Activated CD4-positive, alpha-beta T cell treated with anti-CD3 and anti-CD28 coated beads, Interleukin-2, amount 10 ng/mL, durations not matched to agents 7 days and 5 days (primary cell): ENCODE measurements at regions of chr6 and their contacts with region 1.

Region 1: GRCh38 chr6:90403489-90404381 is 107.1 kb upstream of the BACH2 start:
- DNase-seq: no peak
- H3K4me3 Mint-ChIP-seq: no peak overlapping the region
- H3K27ac Mint-ChIP-seq: peak overlapping the region; percentile 80
- H3K4me1 Mint-ChIP-seq: peaks cover 79% of the 10 kb centered on the region
- H3K27me3 Mint-ChIP-seq: no peaks in the 10 kb centered on the region

Region 2: GRCh38 chr6:90413867-90414266 is 10.1 kb after region 1 on chr6:
- CTCF ChIA-PET with region 1: interaction called, 26 read pairs
- POLR2A ChIA-PET with region 1: no interaction called
- DNase-seq: peak; percentile 79
- H3K4me3 Mint-ChIP-seq: peak overlapping the region; percentile 65
- H3K27ac Mint-ChIP-seq: peak overlapping the region; percentile 92
- H3K4me1 Mint-ChIP-seq: peaks cover 70% of the 10 kb centered on the region
- H3K27me3 Mint-ChIP-seq: peaks cover 2% of the 10 kb centered on the region

Region 3: DNA sequence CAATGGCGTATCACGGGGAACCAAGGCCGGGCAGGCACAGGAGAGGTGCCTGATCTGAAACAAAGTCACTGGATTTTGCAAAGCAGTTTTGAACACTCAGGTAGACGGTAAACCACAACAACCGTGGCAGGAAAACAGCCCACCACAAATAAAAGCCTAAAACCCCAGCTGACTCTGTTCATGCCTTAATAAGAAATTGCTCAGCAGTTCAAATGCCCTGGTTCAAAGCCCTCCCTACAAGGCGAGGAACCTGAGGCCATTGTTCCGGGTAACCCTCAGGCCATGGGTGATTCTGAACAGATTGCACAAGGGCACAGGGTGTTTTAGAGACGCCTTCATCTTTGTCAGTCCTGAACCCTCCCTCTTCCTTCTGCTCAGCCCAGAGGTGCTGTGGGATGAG is 69.0 kb after region 1 on chr6:
- CTCF ChIA-PET with region 1: interaction called, 31 read pairs
- POLR2A ChIA-PET with region 1: no interaction called
- DNase-seq: peak; percentile 74
- H3K4me3 Mint-ChIP-seq: peak overlapping the region; percentile 54
- H3K27ac Mint-ChIP-seq: peak overlapping the region; percentile 94
- H3K4me1 Mint-ChIP-seq: peaks cover 98% of the 10 kb centered on the region
- H3K27me3 Mint-ChIP-seq: peaks cover 3% of the 10 kb centered on the region

Region 4: DNA sequence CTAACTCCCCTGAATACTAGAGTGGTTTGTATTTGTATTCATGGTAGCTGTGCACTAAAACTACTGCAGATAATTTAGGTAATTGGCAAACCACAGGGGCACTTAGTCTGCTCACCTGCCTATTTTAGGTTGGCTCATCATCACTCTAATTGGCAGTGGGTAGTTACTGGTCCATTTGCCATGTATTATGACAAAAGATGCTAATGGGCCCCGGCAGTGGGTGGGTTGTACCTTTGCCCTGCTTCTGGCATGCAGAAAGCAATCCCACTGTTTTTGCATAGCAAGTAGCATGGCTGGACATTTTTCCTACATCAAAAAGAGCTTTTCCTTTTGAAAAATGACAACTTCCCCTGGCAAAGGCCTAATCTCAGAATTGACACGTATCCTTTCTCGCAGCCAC is 924.5 kb after region 1 on chr6:
- CTCF ChIA-PET with region 1: no interaction called
- POLR2A ChIA-PET with region 1: no interaction called
- DNase-seq: no peak
- H3K4me3 Mint-ChIP-seq: no peak overlapping the region
- H3K27ac Mint-ChIP-seq: no peak overlapping the region
- H3K4me1 Mint-ChIP-seq: no peaks in the 10 kb centered on the region
- H3K27me3 Mint-ChIP-seq: no peaks in the 10 kb centered on the region